Heart left ventricle (tissue), 16 donors: ENCODE measurements at regions of chr2 and their contacts with region 1.

Region 1: DNA sequence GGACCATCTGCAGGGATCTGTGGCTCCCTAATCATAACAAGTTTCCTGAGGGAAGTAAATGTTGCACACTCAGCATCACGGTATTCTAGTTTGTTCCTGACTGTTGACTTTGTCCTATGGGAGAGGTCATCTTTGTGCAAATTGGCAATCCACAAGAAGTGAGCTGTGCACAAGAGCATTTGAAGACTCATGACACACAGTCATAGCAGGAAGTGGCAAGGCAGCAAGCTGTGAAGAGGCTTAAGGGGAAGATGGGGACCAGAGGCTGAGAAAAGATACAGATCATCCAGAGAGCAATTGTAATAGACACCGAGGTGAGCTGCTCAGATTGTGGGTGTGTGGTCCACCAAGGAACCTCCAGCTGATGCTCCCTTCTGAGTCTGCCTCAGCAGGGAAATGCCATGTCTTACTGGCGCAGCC is 2.7 kb downstream of the TNP1 start:
- DNase-seq: no peak
- ATAC-seq: no peak
- H3K4me3 ChIP-seq: no peak overlapping the region
- H3K27ac ChIP-seq: no peak overlapping the region
- H3K4me1 ChIP-seq: peaks cover 0 to 38% (median 19%) of the 10 kb centered on the region in 12 donors
- H3K27me3 ChIP-seq: no peaks in the 10 kb centered on the region
- CTCF ChIP-seq: no peak
- POLR2A ChIP-seq: no peak

Region 2: GRCh38 chr2:216735086-216735485 is 122.1 kb before region 1 on chr2:
- intact Hi-C with region 1: no loop called
- DNase-seq: no peak
- ATAC-seq: peak; percentile 21 to 66 (median 49)
- H3K4me3 ChIP-seq: no peak overlapping the region
- H3K27ac ChIP-seq: peak overlapping the region in 6 of 12 donors; percentile 4 to 80 (median 26)
- H3K4me1 ChIP-seq: peaks cover 0 to 17% (median 2%) of the 10 kb centered on the region in 12 donors
- H3K27me3 ChIP-seq: no peaks in the 10 kb centered on the region
- CTCF ChIP-seq: no peak
- POLR2A ChIP-seq: no peak

Region 3: GRCh38 chr2:216765761-216766262 is 91.3 kb before region 1 on chr2:
- intact Hi-C with region 1: no loop called
- DNase-seq: peak; percentile 40 to 72 (median 56)
- ATAC-seq: peak; percentile 37 to 90 (median 84)
- H3K4me3 ChIP-seq: peak overlapping the region in 1 of 12 donors; percentile 7
- H3K27ac ChIP-seq: peak overlapping the region in 4 of 12 donors; percentile 16 to 64 (median 45)
- H3K4me1 ChIP-seq: peaks cover 0 to 26% (median 12%) of the 10 kb centered on the region in 12 donors
- H3K27me3 ChIP-seq: no peaks in the 10 kb centered on the region
- CTCF ChIP-seq: peak in 3 of 12 donors; percentile 18 to 38 (median 21)
- POLR2A ChIP-seq: no peak

Region 4: DNA sequence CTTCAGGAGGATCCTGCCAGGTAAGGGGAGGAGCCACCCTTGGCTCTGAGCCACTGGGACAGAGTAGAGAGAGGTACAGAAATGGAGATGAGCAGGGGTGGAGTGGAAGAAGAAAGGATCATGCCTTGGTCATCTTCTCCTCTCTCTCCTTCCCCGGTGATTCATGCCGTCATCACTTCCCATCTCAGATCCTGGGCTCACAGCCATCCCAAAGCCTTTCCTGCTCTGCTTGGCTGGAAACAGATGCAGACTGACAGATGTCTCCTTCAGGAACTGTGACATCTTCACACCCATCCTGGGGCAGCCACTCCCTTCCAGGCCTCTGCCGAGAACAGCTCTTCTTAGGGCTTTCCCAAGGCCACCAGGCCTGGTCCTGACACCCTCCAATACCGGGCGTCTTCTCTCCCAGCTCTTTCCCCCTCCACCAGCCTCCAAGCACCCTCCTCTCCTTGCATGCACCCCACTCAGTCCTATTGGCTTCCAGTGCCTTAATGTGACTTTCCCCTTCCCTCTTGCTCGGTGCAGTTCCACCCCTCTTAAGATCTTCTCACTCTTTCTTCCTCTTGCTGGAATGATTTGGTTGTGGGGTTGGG is 61.0 kb after region 1 on chr2:
- intact Hi-C with region 1: loop called in 1 of 10 experiments (anchors 5 kb)
- DNase-seq: peak in 4 of 5 donors; percentile 38 to 57 (median 44)
- ATAC-seq: peak in 3 of 4 donors; percentile 53 to 79 (median 68)
- H3K4me3 ChIP-seq: no peak overlapping the region
- H3K27ac ChIP-seq: no peak overlapping the region
- H3K4me1 ChIP-seq: peaks cover 0 to 8% (median 0%) of the 10 kb centered on the region in 12 donors
- H3K27me3 ChIP-seq: no peaks in the 10 kb centered on the region
- CTCF ChIP-seq: no peak
- POLR2A ChIP-seq: no peak

Region 5: GRCh38 chr2:217538719-217539118 is 681.6 kb after region 1 on chr2:
- intact Hi-C with region 1: no loop called
- DNase-seq: no peak
- ATAC-seq: no peak
- H3K4me3 ChIP-seq: no peak overlapping the region
- H3K27ac ChIP-seq: no peak overlapping the region
- H3K4me1 ChIP-seq: peaks cover 0 to 17% (median 0%) of the 10 kb centered on the region in 12 donors
- H3K27me3 ChIP-seq: no peaks in the 10 kb centered on the region
- CTCF ChIP-seq: no peak
- POLR2A ChIP-seq: no peak